Activated CD4-positive, alpha-beta T cell treated with anti-CD3 and anti-CD28 coated beads, Interleukin-2, amount 10 ng/mL, durations not matched to agents 7 days and 5 days (primary cell): ENCODE measurements at regions of chr12 and their contacts with region 1.

Region 1: GRCh38 chr12:92275443-92276154 is 130.0 kb upstream of the BTG1 start:
- DNase-seq: no peak
- H3K4me3 Mint-ChIP-seq: no peak overlapping the region
- H3K27ac Mint-ChIP-seq: no peak overlapping the region
- H3K4me1 Mint-ChIP-seq: peaks cover 9% of the 10 kb centered on the region
- H3K27me3 Mint-ChIP-seq: no peaks in the 10 kb centered on the region

Region 2: DNA sequence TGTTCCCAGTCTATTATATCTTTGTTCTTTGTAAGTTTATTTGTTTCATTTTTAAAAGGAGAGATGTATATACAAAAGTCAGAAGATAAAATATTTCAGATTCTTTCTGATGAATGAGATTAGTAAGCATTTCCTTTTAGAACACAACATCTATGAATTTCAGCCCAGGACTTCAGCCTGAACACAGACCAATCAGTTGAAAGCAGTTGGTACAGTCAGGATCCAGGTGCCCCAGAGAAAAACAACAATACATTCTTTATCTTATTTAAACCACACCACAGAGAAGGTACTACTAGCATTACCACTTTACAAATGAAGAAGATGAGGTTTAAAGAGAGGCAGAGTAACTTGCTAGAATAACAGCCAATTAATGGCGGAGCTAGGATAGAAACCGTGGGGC is 15.7 kb before region 1 on chr12:
- CTCF ChIA-PET with region 1: interaction called, 10 read pairs
- POLR2A ChIA-PET with region 1: no interaction called
- DNase-seq: no peak
- H3K4me3 Mint-ChIP-seq: no peak overlapping the region
- H3K27ac Mint-ChIP-seq: no peak overlapping the region
- H3K4me1 Mint-ChIP-seq: peaks cover 11% of the 10 kb centered on the region
- H3K27me3 Mint-ChIP-seq: no peaks in the 10 kb centered on the region

Region 3: DNA sequence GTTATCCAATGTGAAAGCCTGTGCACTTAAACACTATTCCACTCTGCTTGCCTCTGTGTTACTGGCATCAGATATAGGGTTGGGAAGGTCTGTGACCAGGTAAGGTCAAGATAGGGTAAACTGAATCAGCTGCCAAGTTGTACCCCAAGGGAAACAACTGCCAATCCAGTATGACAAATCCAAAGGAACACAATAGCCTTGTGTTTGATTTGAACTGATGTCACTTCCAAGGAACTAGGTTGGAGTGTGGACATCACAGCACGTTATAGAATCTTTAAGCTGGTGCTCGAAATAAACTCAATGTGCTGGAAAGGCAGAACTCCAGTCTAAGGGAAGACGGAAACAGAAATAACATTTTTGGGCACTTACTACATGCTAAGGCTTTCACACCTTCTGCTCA is 93.5 kb after region 1 on chr12:
- CTCF ChIA-PET with region 1: no interaction called
- POLR2A ChIA-PET with region 1: no interaction called
- DNase-seq: no peak
- H3K4me3 Mint-ChIP-seq: no peak overlapping the region
- H3K27ac Mint-ChIP-seq: no peak overlapping the region
- H3K4me1 Mint-ChIP-seq: peaks cover 14% of the 10 kb centered on the region
- H3K27me3 Mint-ChIP-seq: no peaks in the 10 kb centered on the region